HAP-1 (cell line): ENCODE measurements at regions of chr3 and their contacts with region 1.

Region 1: DNA sequence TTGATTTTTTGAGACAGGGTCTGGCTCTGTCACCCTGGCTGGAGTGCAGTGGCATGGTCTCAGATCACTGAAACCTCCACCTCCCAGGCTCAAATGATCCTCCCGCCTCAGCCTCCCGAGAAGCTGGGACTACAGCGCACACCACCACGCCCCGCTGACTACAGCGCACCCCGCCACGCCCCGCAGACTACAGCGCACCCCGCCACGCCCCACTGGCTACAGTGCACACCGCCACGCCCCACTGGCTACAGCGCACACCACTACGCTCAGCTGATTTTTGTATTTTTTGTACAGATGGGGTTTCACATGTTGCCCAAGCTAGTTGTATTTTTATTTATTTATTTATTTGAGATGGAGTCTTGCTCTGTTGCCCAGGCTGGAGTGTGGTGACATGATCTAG is 35.6 kb downstream of the SLC51A start:
- DNase-seq: no peak
- H3K4me3 ChIP-seq: no peak overlapping the region
- H3K4me1 ChIP-seq: no peaks in the 10 kb centered on the region
- H3K27me3 ChIP-seq: no peaks in the 10 kb centered on the region

Region 2: DNA sequence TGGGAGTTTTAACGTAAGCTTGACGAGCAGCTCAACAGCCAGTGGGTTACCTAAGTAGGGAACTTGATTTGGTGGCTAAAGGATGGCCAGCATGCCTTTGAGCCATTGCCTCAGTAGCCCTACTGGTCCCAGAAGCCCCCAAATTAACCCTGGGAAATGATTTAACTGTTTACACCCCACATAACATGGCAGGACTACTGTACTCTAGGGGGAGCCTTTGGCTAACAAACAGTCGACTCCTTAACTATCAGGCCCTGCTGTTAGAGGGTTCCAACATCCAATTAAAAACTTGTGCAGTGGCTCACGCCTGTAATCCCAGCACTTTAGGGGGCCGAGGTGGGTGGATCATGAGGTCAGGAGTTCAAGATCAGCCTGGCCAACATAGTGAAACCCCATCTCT is 272.6 kb after region 1 on chr3:
- in situ Hi-C with region 1: loop called (anchors 5 kb)
- DNase-seq: no peak
- H3K4me3 ChIP-seq: no peak overlapping the region
- H3K4me1 ChIP-seq: peaks cover 10% of the 10 kb centered on the region
- H3K27me3 ChIP-seq: no peaks in the 10 kb centered on the region